Lower leg skin (tissue), 4 donors: ENCODE measurements at regions of chr1 and their contacts with region 1.

Region 1: GRCh38 chr1:210669951-210670350 is 341.2 kb downstream of the HHAT start:
- DNase-seq: no peak
- H3K4me3 ChIP-seq: no peak overlapping the region
- CTCF ChIP-seq: no peak
- POLR2A ChIP-seq: no peak

Region 2: DNA sequence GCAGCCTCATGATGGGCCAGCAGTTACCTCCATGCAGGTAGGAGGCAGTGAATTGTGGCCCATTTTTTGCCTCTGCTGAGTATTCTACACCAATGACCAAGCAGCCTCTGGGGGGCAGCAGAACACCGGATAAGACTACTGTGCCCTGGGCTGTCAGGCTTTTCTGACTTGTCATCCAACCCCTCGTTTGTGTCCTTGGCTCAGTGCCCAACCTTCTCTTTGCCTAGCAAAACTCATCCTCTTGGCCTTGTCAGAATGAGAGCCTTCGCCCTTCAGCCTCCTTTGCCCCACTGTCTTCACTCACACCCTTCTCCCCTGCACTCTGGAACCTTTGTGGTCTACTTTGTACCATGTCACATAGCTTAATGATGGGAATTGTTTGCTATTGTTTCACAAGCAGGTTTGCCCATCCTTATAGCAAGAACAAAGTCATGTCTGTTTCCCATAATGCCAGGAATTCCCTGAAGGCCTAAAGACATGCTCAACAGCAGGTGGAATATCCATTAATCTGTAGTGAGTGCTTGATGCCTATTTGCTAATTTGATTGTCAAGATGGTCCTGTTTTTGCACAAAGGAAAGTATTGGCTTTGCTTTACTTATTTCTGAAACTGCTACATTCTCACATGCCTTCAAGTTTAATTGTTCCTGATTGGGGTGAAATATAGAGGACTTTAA is 85.4 kb before region 1 on chr1:
- intact Hi-C with region 1: no loop called
- DNase-seq: peak in 1 of 2 donors; percentile 35
- H3K4me3 ChIP-seq: no peak overlapping the region
- CTCF ChIP-seq: no peak
- POLR2A ChIP-seq: no peak

Region 3: DNA sequence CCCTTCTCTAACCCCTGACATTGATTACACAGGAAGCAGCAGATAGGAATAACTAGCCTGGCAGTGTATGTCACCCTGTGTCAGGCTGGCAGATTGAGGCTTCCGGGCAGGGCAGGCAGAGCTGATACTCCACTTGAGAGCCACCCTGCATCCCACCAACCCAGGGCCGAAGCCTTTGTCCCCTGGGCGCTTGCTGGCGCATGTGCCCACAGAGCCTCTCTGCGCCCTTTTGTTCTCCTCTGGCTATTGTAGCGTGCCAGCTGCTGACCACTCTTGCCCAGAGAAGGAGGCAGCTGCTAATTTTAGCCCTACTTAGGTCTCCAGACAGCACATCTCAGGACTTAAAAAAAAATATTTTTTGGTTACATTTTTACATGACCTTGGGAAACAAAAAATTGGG is 36.3 kb before region 1 on chr1:
- intact Hi-C with region 1: no loop called
- DNase-seq: no peak
- H3K4me3 ChIP-seq: no peak overlapping the region
- CTCF ChIP-seq: no peak
- POLR2A ChIP-seq: no peak

Region 4: DNA sequence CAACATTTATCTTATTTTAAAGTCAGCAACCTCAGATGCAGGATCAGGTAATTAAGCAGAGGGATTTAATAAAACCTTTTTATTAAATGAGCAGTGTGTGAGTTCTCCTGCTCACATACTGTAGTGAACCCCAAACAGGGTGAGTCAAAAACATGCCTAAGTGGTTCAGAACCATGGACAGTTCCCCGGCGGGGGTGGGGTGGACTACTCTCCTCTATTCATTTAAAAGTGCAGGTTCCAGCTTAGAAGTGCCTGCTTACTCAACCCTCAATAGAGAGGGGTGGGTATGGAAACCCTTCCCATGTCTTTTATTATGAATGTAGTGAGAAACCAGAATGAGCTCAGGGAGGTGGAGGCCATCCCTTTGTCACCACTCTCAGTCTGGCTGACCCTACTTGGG is 56.7 kb after region 1 on chr1:
- intact Hi-C with region 1: no loop called
- DNase-seq: no peak
- H3K4me3 ChIP-seq: no peak overlapping the region
- CTCF ChIP-seq: no peak
- POLR2A ChIP-seq: no peak

Region 5: DNA sequence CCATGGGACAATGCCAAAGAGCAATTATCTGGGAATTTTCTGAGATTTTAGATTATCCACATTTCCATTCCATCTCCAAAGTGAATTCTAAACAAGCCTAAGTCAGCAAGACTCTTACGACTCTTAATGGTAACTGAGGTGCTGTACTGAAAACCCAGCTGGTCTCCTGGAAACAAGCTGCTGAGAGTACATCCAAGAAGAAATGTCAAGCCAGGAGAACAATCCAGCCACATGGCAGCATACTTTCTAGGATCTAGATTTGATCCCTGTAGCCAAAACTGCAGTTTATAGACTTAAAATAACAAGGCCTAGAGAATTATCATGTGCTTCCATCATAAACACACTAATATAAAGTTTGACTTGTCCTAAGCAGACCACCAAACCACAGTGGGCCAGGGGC is 418.2 kb after region 1 on chr1:
- intact Hi-C with region 1: loop called (anchors 5 kb)
- DNase-seq: no peak
- H3K4me3 ChIP-seq: no peak overlapping the region
- CTCF ChIP-seq: no peak
- POLR2A ChIP-seq: no peak